Activated CD4-positive, alpha-beta memory T cell treated with anti-CD3 and anti-CD28 coated beads, Interleukin-2, amount 10 ng/mL, durations not matched to agents 7 days and 5 days (primary cell): ENCODE measurements at regions of chr17 and their contacts with region 1.

Region 1: GRCh38 chr17:7435221-7435675 is at the start of gene TMEM102:
- DNase-seq: peak; percentile 98
- H3K4me3 Mint-ChIP-seq: peak within 1 kb of the TSS; percentile 90
- H3K27ac Mint-ChIP-seq: peak within 1 kb of the TSS; percentile 98
- H3K4me1 Mint-ChIP-seq: peaks cover 39% of the 10 kb centered on the region
- H3K27me3 Mint-ChIP-seq: peaks cover 20% of the 10 kb centered on the region
- total RNA-seq, gene TMEM102: 18.0 TPM

Region 2: GRCh38 chr17:7351665-7352501 is 83.4 kb before region 1 on chr17 and contains the start of gene KCTD11:
- CTCF ChIA-PET with region 1: interaction called, 47 read pairs
- POLR2A ChIA-PET with region 1: interaction called, 20 read pairs
- DNase-seq: peak; percentile 85
- H3K4me3 Mint-ChIP-seq: peak within 1 kb of the TSS; percentile 66
- H3K27ac Mint-ChIP-seq: peak within 1 kb of the TSS; percentile 70
- H3K4me1 Mint-ChIP-seq: peaks cover 73% of the 10 kb centered on the region
- H3K27me3 Mint-ChIP-seq: no peaks in the 10 kb centered on the region
- total RNA-seq, gene KCTD11: 5.8 to 5.9 TPM

Region 3: DNA sequence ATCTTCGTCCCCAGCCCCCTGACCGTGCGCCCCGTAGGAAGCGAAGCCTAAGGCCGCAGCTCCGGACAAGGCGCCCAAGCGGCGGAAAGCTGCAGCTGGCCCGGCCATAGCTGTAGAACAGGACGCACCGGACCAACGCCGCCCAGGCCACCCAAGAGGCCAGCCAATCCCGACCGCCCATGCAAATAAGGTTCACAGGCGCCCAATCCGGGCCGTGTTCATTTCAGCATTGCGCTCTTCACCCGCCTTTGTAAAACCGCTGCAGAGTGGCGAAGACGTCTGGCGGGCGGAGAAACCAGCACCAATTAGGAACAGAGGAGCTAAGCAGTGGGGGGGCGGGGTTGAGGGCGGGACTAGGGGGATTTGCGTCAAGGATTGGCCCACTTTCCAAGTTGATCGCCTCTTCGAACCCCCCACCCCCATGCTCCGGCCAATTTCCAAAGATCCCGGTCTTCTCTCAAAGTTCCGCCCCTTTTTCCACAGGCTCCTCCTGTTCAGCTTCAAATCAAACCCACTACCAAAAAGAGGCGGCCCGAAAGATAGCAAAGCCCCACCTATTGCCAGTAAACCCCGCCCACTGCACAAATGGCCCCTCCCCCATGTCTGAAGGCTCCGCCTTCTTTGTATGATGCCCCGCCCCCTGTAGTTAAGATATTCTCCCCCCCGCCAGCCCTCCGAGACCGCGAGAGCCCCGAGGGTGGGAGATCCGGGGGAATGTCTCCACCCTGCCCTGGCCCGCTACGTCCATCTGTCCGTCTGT is 31.1 kb before region 1 on chr17 and contains the start of gene TMEM256:
- CTCF ChIA-PET with region 1: interaction called, 18 read pairs
- POLR2A ChIA-PET with region 1: interaction called, 24 read pairs
- DNase-seq: peak; percentile 98
- H3K4me3 Mint-ChIP-seq: peak within 1 kb of the TSS; percentile 95
- H3K27ac Mint-ChIP-seq: peak within 1 kb of the TSS; percentile 91
- H3K4me1 Mint-ChIP-seq: peaks cover 27% of the 10 kb centered on the region
- H3K27me3 Mint-ChIP-seq: peaks cover 15% of the 10 kb centered on the region
- total RNA-seq, gene TMEM256: 73.2 to 77.0 TPM

Region 4: DNA sequence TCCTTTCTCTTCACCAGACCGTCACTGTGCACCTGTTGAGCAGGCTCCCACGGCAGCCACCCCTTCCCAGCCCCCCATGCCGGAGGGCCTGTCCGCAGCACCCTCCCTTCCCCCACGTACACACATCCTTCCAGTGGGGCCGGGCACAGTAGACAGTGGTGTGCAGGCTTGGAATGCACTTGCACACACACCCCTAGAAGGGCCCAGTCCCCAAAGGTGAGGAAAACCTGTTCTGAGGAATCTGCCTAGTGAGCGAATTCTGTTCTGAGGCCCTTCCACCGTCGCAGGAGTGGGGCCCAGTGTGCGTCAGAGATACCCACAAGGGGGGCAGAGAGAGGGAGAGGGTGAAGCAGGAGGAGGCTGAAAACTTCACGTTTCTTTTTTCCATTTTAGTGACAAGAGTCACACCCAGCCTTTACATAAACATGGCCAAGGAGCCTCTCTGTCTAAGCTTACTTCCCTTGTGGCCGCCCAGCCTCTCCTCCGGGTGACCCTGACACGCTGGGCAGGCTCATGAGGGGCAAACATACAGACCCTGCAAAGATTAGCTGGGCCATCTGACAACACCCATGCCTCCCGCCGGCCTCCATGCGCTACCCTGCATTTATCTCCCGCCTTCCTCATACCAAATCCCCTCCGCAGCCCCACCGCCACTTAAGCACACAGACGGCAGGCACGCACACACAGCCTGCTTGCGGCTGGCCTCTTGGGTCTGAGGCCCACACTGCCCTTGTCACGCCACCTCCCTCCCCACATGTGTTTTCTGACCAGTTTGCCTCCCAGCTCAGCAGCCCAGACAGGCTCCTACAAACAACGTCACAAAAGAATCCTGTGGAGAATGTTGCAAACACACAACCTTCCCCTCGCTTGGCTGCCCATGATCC is 42.4 kb after region 1 on chr17:
- CTCF ChIA-PET with region 1: interaction called, 17 read pairs
- POLR2A ChIA-PET with region 1: interaction called, 232 read pairs
- DNase-seq: no peak
- H3K4me3 Mint-ChIP-seq: peak overlapping the region; percentile 86
- H3K27ac Mint-ChIP-seq: peak overlapping the region; percentile 83
- H3K4me1 Mint-ChIP-seq: peaks cover 52% of the 10 kb centered on the region
- H3K27me3 Mint-ChIP-seq: no peaks in the 10 kb centered on the region

Region 5: DNA sequence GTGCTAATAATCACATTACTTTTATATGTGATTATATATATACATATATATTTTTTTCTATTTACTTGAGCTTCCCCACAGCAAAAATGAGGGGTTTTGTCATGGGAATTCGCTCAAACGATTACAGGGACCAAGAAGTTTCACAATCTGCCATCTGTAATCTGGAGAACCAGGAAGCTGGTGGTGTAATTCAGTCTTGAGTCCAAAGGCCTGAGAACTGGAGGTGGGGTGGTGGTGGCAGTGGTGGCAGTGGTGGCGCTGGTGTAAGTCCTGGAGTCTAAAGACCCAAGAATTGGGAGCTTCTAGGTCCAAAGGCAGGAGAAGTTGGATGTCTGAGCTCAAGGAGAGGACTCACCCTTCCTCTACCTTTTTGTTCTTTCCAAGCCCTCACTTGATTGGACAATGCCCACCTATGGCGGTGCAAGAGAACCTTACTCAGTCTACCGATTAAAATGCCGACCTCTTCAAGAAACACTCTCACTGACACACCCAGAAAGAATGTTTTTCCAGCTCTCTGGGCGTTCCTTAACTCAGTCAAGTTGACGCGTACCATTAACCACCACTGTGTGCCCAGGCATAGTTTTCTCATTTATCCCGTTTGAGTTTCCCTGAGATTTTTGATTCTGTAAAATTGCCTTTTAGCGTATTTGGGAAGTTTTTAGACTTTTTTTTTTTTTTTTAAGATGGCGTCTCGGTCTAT is 80.8 kb after region 1 on chr17:
- CTCF ChIA-PET with region 1: interaction called, 14 read pairs
- POLR2A ChIA-PET with region 1: interaction called, 4 read pairs
- DNase-seq: no peak
- H3K4me3 Mint-ChIP-seq: no peak overlapping the region
- H3K27ac Mint-ChIP-seq: no peak overlapping the region
- H3K4me1 Mint-ChIP-seq: no peaks in the 10 kb centered on the region
- H3K27me3 Mint-ChIP-seq: no peaks in the 10 kb centered on the region

Region 6: GRCh38 chr17:7583253-7584109 is 148.2 kb after region 1 on chr17 and contains the start of gene MPDU1:
- CTCF ChIA-PET with region 1: interaction called, 14 read pairs
- POLR2A ChIA-PET with region 1: interaction called, 22 read pairs
- DNase-seq: peak; percentile 96
- H3K4me3 Mint-ChIP-seq: peak within 1 kb of the TSS; percentile 97
- H3K27ac Mint-ChIP-seq: peak within 1 kb of the TSS; percentile 99
- H3K4me1 Mint-ChIP-seq: peaks cover 68% of the 10 kb centered on the region
- H3K27me3 Mint-ChIP-seq: no peaks in the 10 kb centered on the region
- total RNA-seq, gene MPDU1: 54.1 to 58.6 TPM